ENCODE measurements at regions of chr19 and their contacts with region 1.

Region 1: DNA sequence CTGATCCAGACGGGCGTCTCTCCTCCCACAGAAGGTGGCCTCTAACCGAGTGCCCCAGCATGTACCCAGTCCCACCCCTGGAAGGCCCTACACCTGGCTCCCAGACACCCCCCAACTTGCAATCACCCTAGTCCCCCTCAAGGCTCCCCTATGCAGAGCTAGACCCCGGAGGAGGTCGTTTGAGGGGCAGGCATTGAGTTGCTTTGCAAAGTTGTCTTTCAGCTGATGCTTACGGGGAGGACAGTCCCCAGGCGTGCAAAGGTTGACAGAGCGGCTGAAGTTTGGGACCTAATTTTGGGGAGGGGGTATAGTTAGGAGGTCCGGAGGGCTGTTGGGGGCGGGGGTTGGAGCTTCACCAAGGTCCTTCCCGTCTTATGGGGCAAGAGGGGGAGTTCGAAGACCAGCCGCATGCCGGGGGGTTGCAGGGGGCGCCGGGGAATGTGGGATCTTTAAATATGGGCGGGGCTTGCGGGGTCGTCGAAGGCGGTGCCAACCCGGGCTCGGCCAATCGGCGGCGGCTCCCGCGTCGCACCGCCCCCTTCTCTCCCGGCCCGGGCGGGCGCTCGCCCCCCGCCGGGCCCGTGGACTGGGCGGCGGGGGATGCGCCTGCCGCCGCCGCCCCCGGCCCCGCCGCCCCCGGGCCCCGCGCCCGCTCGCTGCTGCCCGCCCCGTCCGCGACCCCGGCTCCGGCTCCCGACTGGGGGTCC is at the start of gene KCNN1:
- DNase-seq: peak in 1 of 2 experiments; percentile 83
- H3K4me3 ChIP-seq: peak within 1 kb of the TSS; percentile 55 to 87 (median 72)
- H3K27ac ChIP-seq: no peak within 1 kb of the TSS
- H3K4me1 ChIP-seq: peaks cover 4 to 18% (median 11%) of the 10 kb centered on the region in 4 experiments
- H3K27me3 ChIP-seq: peaks cover 0 to 9% (median 3%) of the 10 kb centered on the region in 4 experiments; a peak in 3 of 7 replicates
- CTCF ChIP-seq: no peak
- EP300 ChIP-seq: no peak
- POLR2A ChIP-seq: no peak
- RAD21 ChIP-seq: no peak
- total RNA-seq, gene KCNN1: 9.3 and 11.0 TPM in 2 replicates

Region 2: DNA sequence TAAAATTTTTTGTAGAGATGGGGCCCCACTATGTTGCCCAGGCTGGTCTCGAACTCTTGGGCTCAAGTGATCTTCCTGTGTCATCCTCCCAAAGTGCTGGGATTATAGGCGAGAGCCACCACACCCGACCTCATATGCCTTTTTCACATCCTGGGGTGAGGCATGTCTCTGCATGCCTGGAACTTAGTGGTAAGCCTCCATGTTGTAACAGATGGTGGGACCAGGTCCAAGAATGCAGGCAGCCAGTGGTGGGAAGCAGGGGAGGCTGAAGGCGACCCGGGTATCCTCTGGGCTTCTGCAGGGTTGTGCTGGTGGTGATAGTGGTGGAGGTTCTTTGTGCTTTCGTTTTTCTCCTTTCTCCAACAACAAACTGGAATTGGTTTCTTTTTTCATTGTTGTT is 64.0 kb before region 1 on chr19:
- CTCF ChIA-PET with region 1: no interaction called
- POLR2A ChIA-PET with region 1: no interaction called
- DNase-seq: no peak
- H3K4me3 ChIP-seq: no peak overlapping the region
- H3K27ac ChIP-seq: peak overlapping the region; percentile 2; the same call in 1 of the 2 replicates
- H3K4me1 ChIP-seq: no peaks in the 10 kb centered on the region
- H3K27me3 ChIP-seq: no peaks in the 10 kb centered on the region
- CTCF ChIP-seq: no peak
- EP300 ChIP-seq: no peak
- POLR2A ChIP-seq: no peak
- RAD21 ChIP-seq: no peak

Region 3: DNA sequence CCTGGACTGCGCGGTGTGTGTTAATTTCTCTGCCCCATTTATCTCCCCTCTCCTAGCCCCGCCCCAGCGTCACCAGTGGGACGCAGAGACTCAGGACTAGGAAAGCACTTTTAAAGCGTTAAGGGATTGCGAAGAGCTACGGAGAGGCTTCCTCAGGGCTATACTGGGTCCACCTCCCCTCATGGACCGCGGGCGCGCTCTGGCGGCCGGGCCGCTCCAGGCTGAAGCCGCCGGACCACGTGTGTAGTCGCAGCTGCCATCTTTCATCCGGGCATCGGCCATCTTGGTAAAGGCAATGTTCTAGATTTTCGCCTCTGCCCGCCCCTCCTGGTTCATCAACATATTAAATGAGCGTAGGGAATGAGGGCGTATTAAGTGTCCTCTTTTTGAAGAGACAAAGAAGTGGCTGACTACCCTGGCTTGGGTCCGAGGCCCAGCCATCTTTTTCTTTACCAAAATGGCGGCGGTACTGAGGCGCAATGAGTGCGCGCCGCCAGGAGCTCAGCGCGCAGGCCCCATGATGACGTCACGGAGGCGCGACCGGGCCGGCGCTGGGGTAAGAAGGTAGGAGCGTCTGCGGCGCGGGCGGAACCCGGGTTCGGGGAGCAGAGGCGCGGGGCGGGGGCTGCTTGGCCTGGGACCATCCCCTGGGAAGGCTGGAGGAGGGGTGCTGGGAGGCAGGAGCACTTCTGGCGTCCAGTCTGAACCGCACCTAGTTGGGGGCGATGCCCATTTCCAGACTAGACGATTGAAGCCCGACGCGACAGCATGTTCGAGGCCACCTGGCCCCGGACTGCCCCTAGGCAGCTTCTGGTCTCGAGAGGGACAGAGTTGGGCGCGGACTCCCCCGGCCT is 34.0 kb before region 1 on chr19 and contains the start of gene CCDC124:
- CTCF ChIA-PET with region 1: interaction called, 11 read pairs
- POLR2A ChIA-PET with region 1: interaction called, 3 read pairs
- DNase-seq: peak; percentile 86 to 95
- H3K4me3 ChIP-seq: peak within 1 kb of the TSS; percentile 80 to 94 (median 91)
- H3K27ac ChIP-seq: peak within 1 kb of the TSS; percentile 96
- H3K4me1 ChIP-seq: peaks cover 0 to 4% (median 2%) of the 10 kb centered on the region in 4 experiments; a peak in 3 of 7 replicates
- H3K27me3 ChIP-seq: no peaks in the 10 kb centered on the region
- CTCF ChIP-seq: peak; percentile 93 to 97 (median 97)
- EP300 ChIP-seq: peak in 1 of 2 experiments; percentile 16; a peak in 1 of 3 replicates
- POLR2A ChIP-seq: no peak; a peak in 2 of 3 replicates
- RAD21 ChIP-seq: peak; percentile 97 to 98
- total RNA-seq, gene CCDC124: 101 and 103 TPM in 2 replicates

Measured in H1 (cell line).